ENCODE measurements at regions of chr2 and their contacts with region 1.

Region 1: GRCh38 chr2:96760036-96760985 is at the start of gene CNNM4:
- H3K4me3 ChIP-seq: peak within 1 kb of the TSS; percentile 73
- H3K27ac ChIP-seq: peak within 1 kb of the TSS; percentile 75
- H3K4me1 ChIP-seq: peaks cover 14% of the 10 kb centered on the region
- CTCF ChIP-seq: peak; percentile 56; the same call in 1 of the 2 replicates

Region 2: GRCh38 chr2:96739633-96740428 is 20.5 kb before region 1 on chr2 and contains the start of gene LMAN2L:
- CTCF ChIA-PET with region 1: interaction called, 12 read pairs
- POLR2A ChIA-PET with region 1: interaction called, 6 read pairs
- H3K4me3 ChIP-seq: peak within 1 kb of the TSS; percentile 90
- H3K27ac ChIP-seq: peak within 1 kb of the TSS; percentile 48
- H3K4me1 ChIP-seq: 0 out of 2 replicates have a peak, but pooled peaks cover 2% of the 10 kb centered on the region
- CTCF ChIP-seq: peak; percentile 46

Region 3: DNA sequence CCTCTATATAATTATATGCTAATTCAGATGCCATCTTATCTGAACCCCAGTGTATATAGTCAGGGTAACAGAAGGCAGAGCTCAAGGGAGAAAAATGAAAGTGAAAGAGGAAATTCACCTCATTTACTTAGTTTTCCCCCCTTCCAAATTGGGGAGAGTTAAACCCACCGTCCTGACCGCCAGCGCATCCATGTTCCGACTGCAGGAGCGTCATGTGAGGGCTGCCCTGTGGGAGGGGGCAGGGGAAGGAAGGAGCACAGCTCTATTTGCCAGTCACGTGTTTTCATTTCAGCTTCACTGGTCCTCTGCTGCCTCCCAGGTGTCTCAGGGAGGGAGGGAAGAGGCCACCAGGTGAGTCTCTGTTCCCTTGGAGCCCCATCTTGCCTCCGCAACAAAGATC is 13.6 kb after region 1 on chr2:
- CTCF ChIA-PET with region 1: interaction called, 48 read pairs
- POLR2A ChIA-PET with region 1: no interaction called
- H3K4me3 ChIP-seq: no peak overlapping the region
- H3K27ac ChIP-seq: no peak overlapping the region
- H3K4me1 ChIP-seq: no peaks in the 10 kb centered on the region
- CTCF ChIP-seq: no peak

Region 4: GRCh38 chr2:96788442-96789244 is 28.3 kb after region 1 on chr2:
- CTCF ChIA-PET with region 1: interaction called, 15 read pairs
- POLR2A ChIA-PET with region 1: interaction called, 3 read pairs
- H3K4me3 ChIP-seq: no peak overlapping the region
- H3K27ac ChIP-seq: peak overlapping the region; percentile 28; the same call in 1 of the 2 replicates
- H3K4me1 ChIP-seq: peaks cover 14% of the 10 kb centered on the region
- CTCF ChIP-seq: 0 out of 2 replicates have a peak, but pooled peaks have one; percentile 12

Region 5: GRCh38 chr2:96801005-96801785 is 40.9 kb after region 1 on chr2:
- CTCF ChIA-PET with region 1: interaction called, 21 read pairs
- POLR2A ChIA-PET with region 1: interaction called, 6 read pairs
- H3K4me3 ChIP-seq: no peak overlapping the region
- H3K27ac ChIP-seq: no peak overlapping the region
- H3K4me1 ChIP-seq: no peaks in the 10 kb centered on the region
- CTCF ChIP-seq: peak; percentile 87

Measured in HEK293 (cell line).